Activated CD8-positive, alpha-beta T cell treated with anti-CD3 and anti-CD28 coated beads, Interleukin-2, amount 10 ng/mL, durations not matched to agents 7 days and 5 days (primary cell): ENCODE measurements at regions of chr11 and their contacts with region 1.

Region 1: DNA sequence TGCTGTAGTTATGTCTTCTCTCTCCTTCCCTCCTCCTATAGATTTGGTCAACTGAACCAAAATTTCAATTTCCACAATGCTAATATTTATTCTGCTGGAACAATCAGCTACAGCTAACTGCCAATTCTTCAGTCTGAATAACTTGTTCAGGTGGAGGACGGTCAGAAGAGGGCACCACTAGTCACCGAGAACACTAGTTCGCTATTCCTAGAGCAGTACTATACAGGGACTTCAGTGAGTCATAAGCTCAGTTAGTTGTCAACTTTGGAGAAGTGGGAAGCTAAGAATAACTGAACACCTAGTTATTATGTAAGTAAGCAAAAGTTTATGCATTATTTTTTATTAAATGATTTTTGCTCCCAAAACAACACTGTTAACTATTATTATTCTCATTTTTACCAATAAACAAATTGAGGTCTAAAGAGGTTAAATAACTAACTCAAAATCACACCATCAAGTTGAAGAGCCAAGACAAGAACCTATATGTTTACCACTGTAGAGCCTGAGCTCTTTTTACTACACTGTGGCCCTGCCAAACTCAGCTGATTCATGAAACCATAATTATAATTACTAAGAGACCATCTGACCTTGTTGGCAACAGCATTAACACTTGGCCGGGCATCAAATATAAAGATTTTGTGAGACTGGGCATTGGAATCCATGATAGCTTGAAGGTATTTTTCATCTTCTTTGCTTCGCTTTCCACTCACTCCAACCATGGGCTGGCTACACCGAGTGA is 59.0 kb downstream of the CEP57 start:
- DNase-seq: peak; percentile 29
- ATAC-seq: no peak
- H3K4me3 Mint-ChIP-seq: no peak overlapping the region
- H3K27ac Mint-ChIP-seq: no peak overlapping the region
- H3K4me1 Mint-ChIP-seq: peaks cover 2% of the 10 kb centered on the region
- H3K27me3 Mint-ChIP-seq: no peaks in the 10 kb centered on the region

Region 2: DNA sequence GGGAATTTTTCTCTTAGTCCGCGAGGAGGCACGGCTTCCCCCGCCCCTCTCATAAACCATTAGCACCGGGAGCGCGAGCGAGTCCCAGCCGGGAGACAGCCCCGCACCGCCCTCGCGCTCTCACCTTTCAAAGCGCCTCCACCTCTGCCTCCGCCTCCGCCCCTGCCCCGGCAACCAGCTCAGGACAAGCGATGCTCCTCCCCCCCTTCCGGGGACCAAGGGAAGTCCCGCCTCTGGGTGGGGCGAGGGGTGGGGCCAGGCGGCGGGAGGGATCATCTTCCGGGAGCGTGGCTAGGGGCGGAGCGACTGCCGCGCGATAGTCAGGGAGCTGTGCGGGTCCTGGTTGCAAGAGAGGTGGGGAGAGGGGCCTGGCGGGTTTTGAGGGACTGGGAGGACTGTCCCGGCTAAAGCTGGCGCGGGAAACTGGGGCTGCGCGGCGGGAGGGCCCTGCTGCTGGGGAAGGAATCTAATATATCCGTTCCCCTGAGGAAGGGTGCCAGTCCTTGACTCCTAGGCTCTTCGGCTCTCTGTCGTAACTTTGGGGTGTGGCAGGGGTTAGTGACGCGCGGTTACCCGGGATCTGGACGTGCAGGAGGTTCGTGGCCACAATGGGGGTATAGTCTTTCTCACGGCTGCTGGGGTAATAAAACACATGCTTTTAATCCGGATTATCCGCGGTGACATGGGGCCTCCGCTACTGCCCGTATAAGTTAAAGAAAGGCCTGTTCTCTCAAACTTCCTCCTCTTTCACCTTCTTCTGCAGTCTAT is 540.6 kb after region 1 on chr11 and contains the starts of genes CCDC82 and JRKL:
- CTCF ChIA-PET with region 1: interaction called, 17 read pairs
- POLR2A ChIA-PET with region 1: no interaction called
- DNase-seq: peak; percentile 98
- ATAC-seq: peak; percentile 95
- H3K4me3 Mint-ChIP-seq: peak within 1 kb of the TSS; percentile 91
- H3K27ac Mint-ChIP-seq: peak within 1 kb of the TSS; percentile 97
- H3K4me1 Mint-ChIP-seq: peaks cover 59% of the 10 kb centered on the region
- H3K27me3 Mint-ChIP-seq: no peaks in the 10 kb centered on the region
- total RNA-seq, gene CCDC82: 35.7 to 37.5 TPM
- total RNA-seq, gene JRKL: 9.4 to 10.3 TPM